Vagina (tissue), 2 donors: ENCODE measurements at regions of chr18 and their contacts with region 1.

Region 1: GRCh38 chr18:74353169-74353775 is 37.6 kb downstream of the C18orf63 start:
- DNase-seq: no peak
- H3K4me3 ChIP-seq: no peak overlapping the region
- H3K27ac ChIP-seq: no peak overlapping the region
- H3K4me1 ChIP-seq: no peaks in the 10 kb centered on the region
- H3K27me3 ChIP-seq: no peaks in the 10 kb centered on the region
- CTCF ChIP-seq: peak; percentile 57 to 78 (median 68)
- POLR2A ChIP-seq: no peak

Region 2: DNA sequence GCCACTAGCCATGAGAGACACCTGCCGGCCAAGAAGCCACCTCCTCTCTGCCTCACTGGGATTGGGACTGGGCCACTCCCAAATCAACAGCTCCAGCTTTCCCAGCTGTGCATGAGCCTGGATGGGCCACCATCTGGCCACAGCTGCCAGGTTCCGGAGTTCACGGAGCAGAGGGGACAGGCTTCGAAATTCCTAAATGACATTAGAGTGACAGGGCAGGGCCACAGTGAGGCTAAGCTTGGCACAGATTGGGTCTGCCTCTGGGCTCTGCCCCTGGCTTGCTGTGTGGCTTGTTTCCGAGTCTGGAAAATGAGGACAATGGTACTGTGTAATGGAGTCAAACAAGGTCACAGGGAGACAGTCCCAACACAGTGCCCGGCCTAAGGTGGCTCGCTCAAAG is 97.4 kb after region 1 on chr18:
- intact Hi-C with region 1: no loop called
- DNase-seq: peak in 1 of 2 donors; percentile 78
- H3K4me3 ChIP-seq: no peak overlapping the region
- H3K27ac ChIP-seq: no peak overlapping the region
- H3K4me1 ChIP-seq: no peaks in the 10 kb centered on the region
- H3K27me3 ChIP-seq: no peaks in the 10 kb centered on the region
- CTCF ChIP-seq: no peak
- POLR2A ChIP-seq: no peak

Region 3: DNA sequence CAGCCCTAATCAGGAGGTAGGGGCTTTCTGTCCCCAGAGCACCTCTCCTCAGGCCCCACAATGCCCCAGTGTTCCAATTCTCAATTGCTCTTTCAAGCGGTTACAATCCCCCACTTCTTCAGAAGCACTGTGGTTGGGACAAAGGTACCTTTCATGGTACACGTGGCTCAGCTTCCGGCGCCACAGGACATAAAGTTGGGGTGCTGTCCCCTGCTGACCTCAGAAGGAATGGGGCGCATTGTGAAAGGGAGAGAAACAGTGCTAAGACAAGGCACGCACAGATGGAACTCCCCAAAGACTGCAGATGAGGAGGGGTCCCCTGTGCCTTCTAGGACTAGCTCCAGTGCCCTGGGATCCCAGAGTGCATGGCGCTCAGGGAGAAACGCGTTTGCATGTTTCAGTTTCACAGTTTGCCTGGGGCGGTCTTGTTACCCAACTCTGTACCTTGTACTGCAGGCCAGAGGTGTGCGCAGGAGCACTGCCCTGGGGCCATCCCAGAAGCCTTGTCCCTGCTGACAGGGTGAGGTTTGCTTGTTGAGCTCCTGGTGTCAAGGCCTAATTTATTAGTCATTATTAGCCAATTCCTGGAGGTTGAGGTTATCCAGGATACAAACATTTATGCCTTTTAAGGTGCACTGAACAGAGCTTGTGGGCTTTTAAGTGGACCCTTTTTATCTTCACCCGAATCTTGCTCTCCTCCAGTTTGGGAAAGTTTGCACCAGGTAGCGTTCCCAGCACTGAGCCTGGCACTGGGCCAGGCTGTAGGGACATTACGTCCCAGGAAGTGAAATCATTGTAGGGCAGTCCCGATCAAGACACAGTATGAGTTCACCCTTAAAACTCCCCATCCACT is 188.7 kb after region 1 on chr18:
- intact Hi-C with region 1: loop called (anchors 5 kb)
- DNase-seq: no peak
- H3K4me3 ChIP-seq: no peak overlapping the region
- H3K27ac ChIP-seq: no peak overlapping the region
- H3K4me1 ChIP-seq: peaks cover 8% of the 10 kb centered on the region
- H3K27me3 ChIP-seq: no peaks in the 10 kb centered on the region
- CTCF ChIP-seq: no peak
- POLR2A ChIP-seq: no peak

Region 4: DNA sequence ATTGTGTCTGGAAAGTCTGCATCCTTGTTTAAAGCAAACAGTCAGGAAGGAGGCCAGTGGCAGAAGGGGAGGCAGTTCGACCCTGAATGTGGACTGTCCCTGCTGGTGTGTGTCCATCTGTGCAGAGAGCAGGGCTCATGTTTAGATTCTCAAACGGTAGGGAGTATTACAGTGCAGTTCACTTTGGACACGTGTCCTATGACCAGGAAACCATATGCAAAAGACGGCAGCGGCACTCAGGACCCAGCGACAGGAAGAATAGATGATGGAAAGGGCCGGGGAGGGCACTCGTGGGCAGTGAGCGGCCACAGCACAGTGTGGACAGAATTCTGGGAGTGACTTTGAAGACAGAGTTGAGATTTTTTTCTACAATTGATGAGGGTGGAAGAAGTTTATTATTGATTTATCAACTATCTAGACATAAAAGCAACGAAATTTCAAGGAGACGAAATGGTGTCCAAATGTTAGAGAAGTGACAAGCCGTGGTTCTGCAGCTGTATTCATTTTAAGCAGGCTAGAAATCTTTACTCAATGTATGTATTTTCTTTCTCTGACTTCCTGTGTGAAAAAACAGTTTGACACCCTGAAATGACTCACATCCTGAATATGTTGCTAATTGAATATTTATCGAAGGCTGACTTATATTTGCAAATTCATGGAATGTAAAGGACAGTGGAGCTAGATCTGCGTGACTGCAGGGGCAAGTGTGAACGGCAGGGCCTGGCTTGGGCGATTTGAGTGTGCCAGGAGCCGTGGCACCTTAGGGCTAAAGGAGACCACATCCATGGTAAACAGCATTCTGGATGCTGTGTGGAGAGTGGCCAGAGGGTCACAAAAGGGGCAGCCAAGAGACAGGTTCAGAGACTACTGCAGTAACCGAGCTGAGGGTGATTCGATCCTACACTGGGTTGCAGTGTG is 641.5 kb after region 1 on chr18:
- intact Hi-C with region 1: no loop called
- DNase-seq: no peak
- H3K4me3 ChIP-seq: no peak overlapping the region
- H3K27ac ChIP-seq: no peak overlapping the region
- H3K4me1 ChIP-seq: no peaks in the 10 kb centered on the region
- H3K27me3 ChIP-seq: no peaks in the 10 kb centered on the region
- CTCF ChIP-seq: no peak
- POLR2A ChIP-seq: no peak